ENCODE measurements at regions of chr2 and their contacts with region 1.

Region 1: DNA sequence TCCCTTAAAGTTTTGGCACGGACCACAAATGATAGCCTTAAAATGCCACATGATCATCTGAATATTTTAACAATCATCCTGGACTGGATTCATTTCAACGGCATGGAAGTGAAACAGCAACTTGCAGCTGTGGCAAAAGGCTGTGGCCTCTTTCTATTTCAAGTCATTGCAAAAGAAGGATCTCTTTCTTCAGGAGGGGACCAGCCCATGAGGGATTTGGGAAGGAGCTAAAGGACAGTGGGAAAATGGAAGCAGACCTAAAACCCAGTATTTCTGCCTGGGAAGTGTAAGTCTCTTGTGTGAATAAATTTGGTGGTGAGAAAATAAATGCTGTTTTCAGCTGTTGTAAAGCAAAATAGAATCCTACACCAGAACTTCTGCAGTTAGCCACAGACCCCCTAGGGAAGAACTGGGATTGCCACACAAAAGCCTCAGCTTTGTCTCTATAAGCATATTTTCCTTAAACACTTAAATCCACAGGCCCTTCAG is 107.3 kb upstream of the ZFP36L2 start:
- DNase-seq: peak in 1 of 2 donors; percentile 64
- ATAC-seq: peak; percentile 28 to 74 (median 67)
- H3K4me3 ChIP-seq: peak overlapping the region in 3 of 10 donors; percentile 19 to 23 (median 23)
- H3K27ac ChIP-seq: peak overlapping the region; percentile 57 to 90 (median 86)
- H3K4me1 ChIP-seq: peaks cover 13 to 72% (median 55%) of the 10 kb centered on the region in 9 donors
- H3K27me3 ChIP-seq: no peaks in the 10 kb centered on the region
- CTCF ChIP-seq: no peak

Region 2: GRCh38 chr2:42878581-42878980 is 455.1 kb before region 1 on chr2:
- intact Hi-C with region 1: no loop called
- DNase-seq: no peak
- ATAC-seq: no peak
- H3K4me3 ChIP-seq: no peak overlapping the region
- H3K27ac ChIP-seq: peak overlapping the region; percentile 61 to 95 (median 82)
- H3K4me1 ChIP-seq: peaks cover 33 to 86% (median 71%) of the 10 kb centered on the region in 9 donors
- H3K27me3 ChIP-seq: no peaks in the 10 kb centered on the region
- CTCF ChIP-seq: no peak

Region 3: GRCh38 chr2:43399515-43400264 is 66.0 kb after region 1 on chr2:
- intact Hi-C with region 1: loop called in 2 of 10 experiments (anchors 5 to 10 kb)
- DNase-seq: peak in 1 of 2 donors; percentile 29
- ATAC-seq: peak in 6 of 8 donors; percentile 54 to 85 (median 70)
- H3K4me3 ChIP-seq: no peak overlapping the region
- H3K27ac ChIP-seq: peak overlapping the region in 9 of 10 donors; percentile 15 to 68 (median 55)
- H3K4me1 ChIP-seq: peaks cover 0 to 29% (median 19%) of the 10 kb centered on the region in 9 donors
- H3K27me3 ChIP-seq: no peaks in the 10 kb centered on the region
- CTCF ChIP-seq: no peak

Region 4: DNA sequence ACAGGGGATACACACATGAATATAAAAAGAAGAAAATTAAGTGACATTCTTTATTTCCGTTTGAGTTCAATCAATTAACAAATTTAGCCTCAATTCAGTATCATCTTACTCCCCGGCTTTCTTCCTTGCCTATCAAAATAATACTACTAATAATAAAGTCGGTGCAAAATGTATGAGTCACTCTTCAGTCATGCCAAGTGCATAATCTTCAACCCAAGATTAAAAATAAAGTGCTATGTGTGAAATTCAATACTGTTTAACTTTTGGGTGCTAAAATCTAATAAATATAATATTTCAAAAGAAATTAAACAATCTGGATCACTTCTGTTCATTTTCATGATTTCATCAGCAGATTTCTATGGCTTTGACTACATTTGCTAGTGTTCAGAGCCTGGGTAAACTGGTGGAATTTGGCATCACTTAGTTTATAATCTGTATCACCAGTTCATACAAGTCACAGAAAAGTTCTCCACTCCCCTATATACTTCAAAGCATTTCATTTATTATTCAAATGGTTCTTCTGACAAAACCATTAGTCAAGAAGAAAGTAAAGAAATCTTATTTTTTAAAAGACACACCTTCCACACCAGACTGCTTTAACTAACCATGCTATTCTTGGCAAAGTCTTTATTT is 78.5 kb after region 1 on chr2:
- intact Hi-C with region 1: loop called in 1 of 10 experiments (anchors 5 kb)
- DNase-seq: no peak
- ATAC-seq: peak in 4 of 8 donors; percentile 62 to 76 (median 70)
- H3K4me3 ChIP-seq: no peak overlapping the region
- H3K27ac ChIP-seq: peak overlapping the region in 5 of 10 donors; percentile 26 to 62 (median 51)
- H3K4me1 ChIP-seq: peaks cover 0 to 63% (median 54%) of the 10 kb centered on the region in 9 donors
- H3K27me3 ChIP-seq: no peaks in the 10 kb centered on the region
- CTCF ChIP-seq: no peak